ENCODE measurements at regions of chr17 and their contacts with region 1.

Region 1: DNA sequence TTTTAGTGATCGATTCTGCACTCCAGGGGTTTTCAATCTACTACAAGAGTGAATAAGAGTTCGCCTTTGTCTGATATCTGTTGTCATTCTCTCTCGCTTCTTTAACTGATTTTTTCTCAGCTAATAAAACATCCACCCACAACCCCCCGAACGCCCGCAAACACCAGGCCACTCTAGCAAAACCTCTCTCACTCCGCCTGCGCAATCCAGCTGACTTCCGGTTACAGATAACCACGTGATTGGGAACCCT is 338 bp upstream of the RPL19 start:
- DNase-seq: peak; percentile 99
- H3K4me3 Mint-ChIP-seq: peak overlapping the region; percentile 86
- H3K27ac Mint-ChIP-seq: peak overlapping the region; percentile 99
- H3K4me1 Mint-ChIP-seq: peaks cover 41% of the 10 kb centered on the region
- H3K27me3 Mint-ChIP-seq: no peaks in the 10 kb centered on the region
- CTCF ChIP-seq: no peak

Region 2: DNA sequence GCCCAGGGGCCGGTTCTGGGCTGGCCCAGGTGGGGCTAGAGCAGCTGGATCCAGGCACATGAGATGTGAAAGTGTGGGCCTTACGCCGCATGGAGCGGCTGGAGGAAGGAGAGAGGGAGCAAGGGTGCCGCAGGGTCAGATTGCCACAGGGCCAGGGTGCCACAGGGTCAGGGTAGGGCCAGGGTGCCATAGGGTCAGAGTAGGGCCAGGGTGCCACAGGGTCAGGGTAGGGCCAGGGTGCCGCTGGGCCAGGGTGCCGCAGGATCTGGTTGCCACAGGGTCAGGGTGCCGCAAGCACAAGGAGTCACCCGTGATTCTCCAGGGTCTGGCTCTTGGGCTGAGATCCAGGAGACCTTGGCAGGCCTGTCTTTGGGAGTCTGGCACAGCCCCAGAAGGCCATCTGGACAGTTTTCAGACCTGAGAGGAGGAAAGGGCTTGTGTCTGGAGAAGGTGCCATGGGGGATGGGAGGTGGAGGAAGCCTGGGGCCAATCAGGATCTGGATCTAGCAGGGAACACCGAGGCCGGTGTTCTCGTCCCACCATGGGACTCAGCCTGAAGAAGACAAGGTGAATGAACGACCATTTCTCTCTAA is 287.4 kb before region 1 on chr17:
- CTCF ChIA-PET with region 1: no interaction called
- intact Hi-C with region 1: no loop called
- DNase-seq: no peak
- H3K4me3 Mint-ChIP-seq: no peak overlapping the region
- H3K27ac Mint-ChIP-seq: no peak overlapping the region
- H3K4me1 Mint-ChIP-seq: peaks cover 8% of the 10 kb centered on the region
- H3K27me3 Mint-ChIP-seq: no peaks in the 10 kb centered on the region
- CTCF ChIP-seq: no peak

Region 3: GRCh38 chr17:39026980-39027451 is 172.7 kb before region 1 on chr17:
- CTCF ChIA-PET with region 1: no interaction called
- intact Hi-C with region 1: no loop called
- DNase-seq: peak; percentile 83
- H3K4me3 Mint-ChIP-seq: peak overlapping the region; percentile 70
- H3K27ac Mint-ChIP-seq: no peak overlapping the region
- H3K4me1 Mint-ChIP-seq: peaks cover 7% of the 10 kb centered on the region
- H3K27me3 Mint-ChIP-seq: peaks cover 70% of the 10 kb centered on the region
- CTCF ChIP-seq: no peak

Region 4: DNA sequence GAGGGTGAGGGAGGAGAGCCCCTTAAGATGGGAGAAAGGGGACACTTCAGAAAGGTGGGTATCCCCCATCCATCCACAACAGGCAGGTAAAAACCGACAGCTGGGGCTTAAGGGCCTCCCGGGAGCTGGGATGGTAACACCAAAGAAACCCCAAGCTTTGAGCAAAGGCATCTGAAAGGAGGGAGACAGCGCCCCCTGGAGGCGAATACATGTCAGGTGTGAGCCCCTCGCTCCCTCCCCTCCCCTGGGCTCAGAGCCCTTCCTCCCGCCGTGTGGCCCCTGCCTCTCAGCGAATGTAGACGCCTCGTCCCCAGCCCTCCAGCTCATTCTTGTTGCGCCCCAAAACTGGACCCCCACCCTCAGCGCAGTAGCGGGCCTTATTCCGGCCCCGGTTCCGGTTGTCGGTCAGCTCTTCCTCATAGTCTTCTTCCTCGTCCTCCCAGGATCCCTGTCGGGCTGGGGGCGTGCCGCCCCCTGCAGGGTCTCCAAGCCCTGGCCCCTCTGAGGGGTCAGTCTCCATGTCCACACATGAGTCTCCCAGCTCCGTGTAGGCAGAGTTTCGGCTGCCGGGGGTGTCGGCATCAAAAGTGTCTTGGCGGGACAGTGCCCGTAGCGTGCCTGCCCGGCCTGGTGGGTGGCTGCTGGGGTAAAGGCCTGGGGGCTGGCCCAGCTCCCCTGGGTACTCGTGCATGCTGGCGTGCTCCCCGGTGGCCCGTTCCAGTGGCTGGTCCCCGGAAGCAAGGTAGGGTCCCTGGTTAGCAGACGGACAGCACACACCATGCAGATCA is 24.6 kb before region 1 on chr17:
- CTCF ChIA-PET with region 1: interaction called, 13 read pairs
- intact Hi-C with region 1: no loop called
- DNase-seq: peak; percentile 92
- H3K4me3 Mint-ChIP-seq: no peak overlapping the region
- H3K27ac Mint-ChIP-seq: no peak overlapping the region
- H3K4me1 Mint-ChIP-seq: peaks cover 16% of the 10 kb centered on the region
- H3K27me3 Mint-ChIP-seq: no peaks in the 10 kb centered on the region
- CTCF ChIP-seq: peak; percentile 100

Region 5: DNA sequence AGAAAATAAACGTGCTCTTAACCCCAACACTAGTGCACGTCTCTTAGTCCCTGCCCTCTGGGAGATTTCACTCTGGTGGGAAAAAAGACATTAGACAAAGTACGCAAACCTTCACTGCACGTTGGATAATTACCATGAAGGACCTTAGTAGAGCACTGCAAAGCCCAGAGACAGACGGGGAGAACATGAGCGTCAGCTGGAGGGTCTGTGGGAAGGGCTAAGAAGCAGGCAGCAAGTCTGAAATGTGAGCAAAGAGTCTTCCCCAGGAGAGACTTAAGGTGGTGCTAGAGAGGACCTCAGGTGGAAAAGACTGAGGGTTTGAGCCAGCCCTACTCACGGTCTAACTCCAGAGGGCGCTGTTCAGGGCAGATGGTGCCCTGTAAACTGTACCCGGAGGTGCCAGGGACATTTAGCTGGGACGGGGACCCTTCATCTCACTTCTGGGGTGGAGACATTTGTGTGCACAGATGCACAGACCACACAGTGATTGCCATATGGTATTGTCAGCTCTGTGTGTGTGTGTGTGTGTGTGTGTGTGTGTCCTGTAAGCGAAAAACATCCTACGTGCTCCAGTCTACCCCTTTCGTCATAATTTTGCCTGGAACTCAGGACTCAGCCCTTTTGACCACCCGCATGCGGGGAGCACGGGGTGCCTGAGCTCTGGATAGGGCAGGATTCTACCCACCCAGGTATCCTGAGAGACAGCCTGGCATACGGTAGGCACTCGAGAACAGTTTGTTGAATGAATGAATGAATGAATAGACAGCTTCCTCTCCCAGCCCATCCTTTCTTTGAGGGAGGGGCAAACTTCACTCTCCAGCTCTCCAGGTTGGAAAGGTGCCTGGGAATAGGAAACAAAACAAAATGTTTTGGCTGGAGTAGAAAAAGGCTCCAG is 36.1 kb after region 1 on chr17:
- CTCF ChIA-PET with region 1: interaction called, 442 read pairs
- intact Hi-C with region 1: no loop called
- DNase-seq: peak; percentile 88
- H3K4me3 Mint-ChIP-seq: no peak overlapping the region
- H3K27ac Mint-ChIP-seq: no peak overlapping the region
- H3K4me1 Mint-ChIP-seq: peaks cover 49% of the 10 kb centered on the region
- H3K27me3 Mint-ChIP-seq: peaks cover 28% of the 10 kb centered on the region
- CTCF ChIP-seq: peak; percentile 100

Region 6: GRCh38 chr17:39385040-39385439 is 185.3 kb after region 1 on chr17:
- CTCF ChIA-PET with region 1: interaction called, 10 read pairs
- intact Hi-C with region 1: no loop called
- DNase-seq: no peak
- H3K4me3 Mint-ChIP-seq: no peak overlapping the region
- H3K27ac Mint-ChIP-seq: no peak overlapping the region
- H3K4me1 Mint-ChIP-seq: no peaks in the 10 kb centered on the region
- H3K27me3 Mint-ChIP-seq: no peaks in the 10 kb centered on the region
- CTCF ChIP-seq: no peak

Region 7: DNA sequence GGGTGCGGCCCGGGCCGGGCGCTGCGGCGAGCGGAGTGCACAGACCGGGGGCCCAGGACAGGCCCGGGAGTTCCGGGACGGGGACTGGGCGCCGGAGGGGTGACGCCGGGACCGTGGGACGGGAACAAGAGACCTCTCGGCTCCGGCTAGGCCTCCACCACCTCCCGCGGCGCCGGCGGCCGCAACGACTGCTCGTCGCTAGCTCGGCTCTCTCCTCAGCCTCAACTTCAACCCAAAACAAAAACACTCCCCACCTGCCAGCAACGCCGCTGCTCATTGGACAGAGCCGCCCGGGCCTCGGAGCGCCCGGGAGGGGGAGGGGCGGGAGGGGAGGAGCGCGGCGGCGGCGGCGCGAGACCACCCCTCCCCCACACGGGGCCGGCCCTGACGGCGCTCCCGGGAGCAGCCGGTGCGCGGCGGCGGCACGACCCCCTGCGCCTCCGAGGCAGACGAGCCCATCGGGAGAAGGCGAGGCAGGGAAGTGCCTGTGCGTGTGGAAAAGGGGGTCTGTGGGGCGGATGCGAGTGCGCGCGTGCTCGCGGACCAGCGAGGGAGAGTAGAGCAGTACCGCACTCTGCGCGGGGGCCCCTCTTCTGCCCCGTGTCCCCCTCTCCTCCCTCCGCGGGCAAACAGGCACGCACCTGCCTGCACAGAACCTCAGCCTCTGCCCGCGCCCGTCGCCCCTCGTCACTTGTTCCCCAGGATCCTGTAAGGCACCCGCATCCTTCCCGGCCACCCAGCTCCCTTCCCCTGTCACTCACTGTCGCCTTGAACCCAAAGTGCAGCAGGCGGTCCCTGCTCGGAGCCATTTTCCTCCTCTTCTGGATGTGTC is 201.9 kb after region 1 on chr17 and contains the start of gene FBXL20:
- CTCF ChIA-PET with region 1: interaction called, 11 read pairs
- intact Hi-C with region 1: no loop called
- DNase-seq: peak; percentile 100
- H3K4me3 Mint-ChIP-seq: peak within 1 kb of the TSS; percentile 89
- H3K27ac Mint-ChIP-seq: peak within 1 kb of the TSS; percentile 98
- H3K4me1 Mint-ChIP-seq: peaks cover 40% of the 10 kb centered on the region
- H3K27me3 Mint-ChIP-seq: no peaks in the 10 kb centered on the region
- CTCF ChIP-seq: no peak
- total RNA-seq, gene FBXL20: 70.3 and 71.5 TPM in 2 replicates

Region 8: DNA sequence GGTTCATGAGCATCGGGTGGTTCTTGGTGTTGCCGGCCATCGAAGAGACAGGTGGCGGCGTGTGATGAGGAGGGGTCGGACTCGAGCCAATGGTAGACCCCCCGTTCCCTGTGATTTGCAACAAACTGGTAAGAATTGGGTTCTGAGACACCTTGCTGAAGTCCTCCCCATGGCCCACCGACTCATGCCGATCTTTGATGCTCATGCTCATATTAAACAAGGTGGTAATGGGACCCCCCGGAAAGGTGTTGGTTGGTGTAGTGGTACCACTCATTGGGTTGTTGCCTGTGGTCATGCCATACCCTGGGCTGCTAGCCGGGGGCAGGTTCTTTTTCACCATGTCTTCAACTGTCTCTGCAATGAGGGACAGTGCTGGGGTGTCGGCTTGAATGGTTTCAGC is 210.5 kb after region 1 on chr17:
- CTCF ChIA-PET with region 1: interaction called, 10 read pairs
- intact Hi-C with region 1: no loop called
- DNase-seq: no peak
- H3K4me3 Mint-ChIP-seq: no peak overlapping the region
- H3K27ac Mint-ChIP-seq: no peak overlapping the region
- H3K4me1 Mint-ChIP-seq: peaks cover 5% of the 10 kb centered on the region
- H3K27me3 Mint-ChIP-seq: no peaks in the 10 kb centered on the region
- CTCF ChIP-seq: no peak